GM12878 (cell line): ENCODE measurements at regions of chr1 and their contacts with region 1.

Region 1: DNA sequence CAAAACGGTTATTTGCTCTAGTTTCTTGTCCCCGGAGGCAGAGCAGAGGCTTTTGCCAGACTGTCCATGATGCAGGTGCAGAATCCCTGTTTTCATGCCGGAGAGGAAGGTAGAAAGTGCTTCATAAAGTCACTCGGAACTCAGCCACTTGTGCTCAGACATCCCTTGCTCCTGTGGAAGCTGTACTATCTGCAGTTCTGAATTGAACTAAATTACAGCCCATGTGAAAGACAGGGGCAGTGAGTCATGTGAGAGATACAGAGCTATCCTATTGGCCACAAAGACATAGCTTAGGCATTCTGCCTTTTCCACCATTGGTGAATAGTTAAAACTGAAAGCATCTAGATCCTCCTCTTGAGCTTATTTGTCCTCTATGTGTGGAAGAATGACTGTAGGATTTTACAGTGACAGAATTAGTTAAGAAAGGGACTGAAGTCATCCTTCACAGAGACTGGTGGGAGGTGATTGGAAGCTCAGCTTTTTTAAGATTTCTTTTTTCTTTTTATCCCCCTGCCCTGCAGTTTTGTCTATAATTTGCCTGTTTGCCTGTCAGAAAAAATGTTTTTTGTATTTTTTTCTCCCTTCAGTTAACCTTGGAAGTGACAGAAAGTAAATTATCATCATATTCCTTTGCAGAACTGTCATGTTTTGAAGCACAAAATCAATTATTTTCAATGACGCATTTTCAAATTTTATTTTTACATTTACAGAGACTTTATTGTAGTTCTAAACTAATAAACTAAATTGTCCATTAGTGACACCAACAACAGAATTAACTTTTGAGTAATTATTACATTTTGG is 298.6 kb downstream of the PTPRC start:
- DNase-seq: peak; percentile 91
- ATAC-seq: peak; percentile 85
- H3K4me3 ChIP-seq: peak overlapping the region; percentile 62
- H3K27ac ChIP-seq: peak overlapping the region; percentile 29
- H3K4me1 ChIP-seq: no peaks in the 10 kb centered on the region; the same call in 1 of the 2 replicates
- H3K27me3 ChIP-seq: no peaks in the 10 kb centered on the region
- CTCF ChIP-seq: no peak
- EP300 ChIP-seq: no peak
- POLR2A ChIP-seq: peak; percentile 87
- RAD21 ChIP-seq: no peak

Region 2: GRCh38 chr1:198798923-198799386 is 138.5 kb before region 1 on chr1:
- CTCF ChIA-PET with region 1: no interaction called
- POLR2A ChIA-PET with region 1: no interaction called
- RAD21 ChIA-PET with region 1: interaction called, 13 read pairs
- SMC1A ChIA-PET with region 1: interaction called, 3 read pairs
- in situ Hi-C with region 1: no loop called
- intact Hi-C with region 1: no loop called
- DNase-seq: peak; percentile 57
- ATAC-seq: peak; percentile 86
- H3K4me3 ChIP-seq: no peak overlapping the region
- H3K27ac ChIP-seq: no peak overlapping the region
- H3K4me1 ChIP-seq: no peaks in the 10 kb centered on the region
- H3K27me3 ChIP-seq: no peaks in the 10 kb centered on the region
- CTCF ChIP-seq: peak in 1 of 3 experiments; percentile 28; a peak in 1 of 6 replicates
- EP300 ChIP-seq: peak; percentile 18 to 25; a peak in 1 of 4 replicates
- POLR2A ChIP-seq: no peak
- RAD21 ChIP-seq: peak; percentile 27; the same call in 1 of the 2 replicates

Region 3: GRCh38 chr1:199002661-199003060 is 65.2 kb after region 1 on chr1:
- CTCF ChIA-PET with region 1: interaction called, 3 read pairs
- POLR2A ChIA-PET with region 1: no interaction called
- RAD21 ChIA-PET with region 1: interaction called, 4 read pairs
- SMC1A ChIA-PET with region 1: interaction called, 10 read pairs
- in situ Hi-C with region 1: no loop called
- intact Hi-C with region 1: loop called (anchors 5 kb)
- DNase-seq: no peak
- ATAC-seq: no peak
- H3K4me3 ChIP-seq: no peak overlapping the region
- H3K27ac ChIP-seq: no peak overlapping the region
- H3K4me1 ChIP-seq: no peaks in the 10 kb centered on the region
- H3K27me3 ChIP-seq: no peaks in the 10 kb centered on the region
- CTCF ChIP-seq: no peak
- EP300 ChIP-seq: no peak
- POLR2A ChIP-seq: no peak
- RAD21 ChIP-seq: no peak

Region 4: DNA sequence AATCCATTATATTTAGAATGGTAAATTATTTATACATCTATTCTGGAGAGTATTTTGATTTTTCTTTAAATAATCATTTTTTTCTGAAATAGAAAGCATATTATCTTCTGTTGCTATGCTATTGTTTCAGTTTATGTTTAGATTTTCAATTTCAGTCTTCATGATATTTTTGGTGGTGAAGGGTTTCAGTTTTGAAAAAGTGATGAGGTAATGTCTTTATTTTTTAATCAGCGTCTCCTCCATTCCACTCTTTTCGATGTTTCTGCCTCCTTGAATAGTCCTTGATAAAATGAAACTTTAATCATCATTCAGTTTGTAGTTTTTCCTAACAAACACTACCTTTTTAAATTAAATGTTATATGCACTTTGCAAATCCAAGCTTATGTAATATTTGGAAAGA is 130.1 kb after region 1 on chr1:
- CTCF ChIA-PET with region 1: interaction called, 5 read pairs
- POLR2A ChIA-PET with region 1: interaction called, 3 read pairs
- RAD21 ChIA-PET with region 1: interaction called, 57 read pairs
- SMC1A ChIA-PET with region 1: interaction called, 29 read pairs
- in situ Hi-C with region 1: no loop called
- intact Hi-C with region 1: no loop called
- DNase-seq: no peak
- ATAC-seq: peak; percentile 90
- H3K4me3 ChIP-seq: 0 out of 2 replicates have a peak overlapping the region, but pooled peaks have one; percentile 11
- H3K27ac ChIP-seq: peak overlapping the region; percentile 61; the same call in 1 of the 2 replicates
- H3K4me1 ChIP-seq: peaks cover 7% of the 10 kb centered on the region; the same call in 1 of the 2 replicates
- H3K27me3 ChIP-seq: no peaks in the 10 kb centered on the region
- CTCF ChIP-seq: no peak
- EP300 ChIP-seq: peak in 1 of 2 experiments; percentile 60; a peak in 1 of 4 replicates
- POLR2A ChIP-seq: no peak
- RAD21 ChIP-seq: no peak

Region 5: GRCh38 chr1:199089393-199090122 is 152.1 kb after region 1 on chr1:
- CTCF ChIA-PET with region 1: interaction called, 3 read pairs
- POLR2A ChIA-PET with region 1: no interaction called
- RAD21 ChIA-PET with region 1: interaction called, 20 read pairs
- SMC1A ChIA-PET with region 1: interaction called, 6 read pairs
- in situ Hi-C with region 1: no loop called
- intact Hi-C with region 1: no loop called
- DNase-seq: peak; percentile 60
- ATAC-seq: peak; percentile 97
- H3K4me3 ChIP-seq: no peak overlapping the region
- H3K27ac ChIP-seq: peak overlapping the region; percentile 59
- H3K4me1 ChIP-seq: peaks cover 6% of the 10 kb centered on the region
- H3K27me3 ChIP-seq: no peaks in the 10 kb centered on the region
- CTCF ChIP-seq: no peak
- EP300 ChIP-seq: peak; percentile 40 to 76
- POLR2A ChIP-seq: no peak
- RAD21 ChIP-seq: no peak

Region 6: DNA sequence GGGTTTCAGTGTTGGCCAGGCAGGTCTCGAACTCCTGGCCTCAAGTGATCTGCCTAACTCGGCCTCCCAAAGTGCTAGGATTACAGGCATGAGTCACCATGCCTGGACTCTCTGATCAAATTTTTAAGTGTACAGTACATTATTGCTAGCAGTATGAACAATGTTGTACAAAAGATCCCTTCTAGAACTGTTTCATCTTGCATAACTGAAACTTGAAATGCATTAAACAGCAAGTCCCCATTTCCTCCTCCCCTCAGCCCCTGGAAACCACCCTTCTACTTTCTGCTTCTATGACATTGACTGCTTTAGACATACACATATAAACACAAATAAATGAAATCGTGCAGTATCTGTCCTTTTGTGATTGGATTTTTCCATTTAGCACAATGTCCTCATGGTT is 164.8 kb after region 1 on chr1:
- CTCF ChIA-PET with region 1: no interaction called
- POLR2A ChIA-PET with region 1: no interaction called
- RAD21 ChIA-PET with region 1: no interaction called
- SMC1A ChIA-PET with region 1: no interaction called
- in situ Hi-C with region 1: no loop called
- intact Hi-C with region 1: no loop called
- DNase-seq: peak; percentile 34
- ATAC-seq: peak; percentile 96
- H3K4me3 ChIP-seq: no peak overlapping the region
- H3K27ac ChIP-seq: no peak overlapping the region
- H3K4me1 ChIP-seq: no peaks in the 10 kb centered on the region; the same call in 1 of the 2 replicates
- H3K27me3 ChIP-seq: no peaks in the 10 kb centered on the region
- CTCF ChIP-seq: no peak
- EP300 ChIP-seq: no peak
- POLR2A ChIP-seq: no peak
- RAD21 ChIP-seq: no peak

Region 7: DNA sequence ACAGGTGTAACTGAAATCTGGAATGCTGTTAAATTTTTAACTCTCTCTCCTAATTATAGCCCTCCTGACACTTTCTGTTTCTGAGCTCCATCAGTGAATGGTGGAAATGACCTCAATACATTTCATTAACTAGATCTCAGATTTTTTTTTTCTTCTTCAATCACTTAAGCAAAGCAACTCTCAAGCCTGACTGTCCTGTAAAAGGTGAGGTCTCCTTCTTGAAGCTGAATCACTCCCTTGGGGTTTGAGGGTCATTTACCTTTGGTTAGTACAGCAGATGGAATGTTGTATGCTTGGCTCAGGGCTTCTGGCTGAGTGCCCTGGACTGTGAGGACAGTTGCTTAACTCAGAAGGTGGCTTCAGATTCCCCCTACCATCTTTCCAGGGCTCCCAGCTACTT is 220.1 kb after region 1 on chr1:
- CTCF ChIA-PET with region 1: no interaction called
- POLR2A ChIA-PET with region 1: no interaction called
- RAD21 ChIA-PET with region 1: interaction called, 22 read pairs
- SMC1A ChIA-PET with region 1: interaction called, 5 read pairs
- in situ Hi-C with region 1: no loop called
- intact Hi-C with region 1: loop called (anchors 10 kb)
- DNase-seq: no peak
- ATAC-seq: peak; percentile 61
- H3K4me3 ChIP-seq: no peak overlapping the region
- H3K27ac ChIP-seq: no peak overlapping the region
- H3K4me1 ChIP-seq: peaks cover 12% of the 10 kb centered on the region; the same call in 1 of the 2 replicates
- H3K27me3 ChIP-seq: no peaks in the 10 kb centered on the region
- CTCF ChIP-seq: no peak
- EP300 ChIP-seq: no peak; a peak in 1 of 4 replicates
- POLR2A ChIP-seq: no peak
- RAD21 ChIP-seq: no peak

Region 8: DNA sequence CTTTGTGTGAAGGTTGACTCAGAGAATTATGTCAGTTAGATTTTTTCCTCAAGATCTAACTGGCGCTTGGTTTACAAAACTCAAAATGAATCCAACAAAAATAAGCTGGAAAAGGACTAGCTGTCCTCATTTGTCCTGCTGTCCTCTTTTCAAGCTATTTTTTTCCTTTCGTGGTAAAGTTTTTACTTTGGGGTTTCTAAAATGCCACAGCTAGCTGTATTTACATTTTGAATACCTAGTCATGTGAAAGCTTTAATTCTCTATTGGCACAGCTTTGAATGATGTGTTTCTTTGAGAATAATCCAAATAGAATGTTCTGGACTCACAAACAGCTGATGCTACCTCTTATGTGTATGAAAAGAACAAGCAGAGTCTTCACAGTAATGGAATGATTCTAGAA is 416.5 kb after region 1 on chr1:
- CTCF ChIA-PET with region 1: no interaction called
- POLR2A ChIA-PET with region 1: no interaction called
- RAD21 ChIA-PET with region 1: no interaction called
- SMC1A ChIA-PET with region 1: no interaction called
- in situ Hi-C with region 1: no loop called
- intact Hi-C with region 1: no loop called
- DNase-seq: no peak
- ATAC-seq: no peak
- H3K4me3 ChIP-seq: no peak overlapping the region
- H3K27ac ChIP-seq: no peak overlapping the region
- H3K4me1 ChIP-seq: no peaks in the 10 kb centered on the region
- H3K27me3 ChIP-seq: no peaks in the 10 kb centered on the region
- CTCF ChIP-seq: no peak
- EP300 ChIP-seq: no peak
- POLR2A ChIP-seq: no peak
- RAD21 ChIP-seq: no peak